ENCODE measurements at regions of chr18 and their contacts with region 1.

Region 1: DNA sequence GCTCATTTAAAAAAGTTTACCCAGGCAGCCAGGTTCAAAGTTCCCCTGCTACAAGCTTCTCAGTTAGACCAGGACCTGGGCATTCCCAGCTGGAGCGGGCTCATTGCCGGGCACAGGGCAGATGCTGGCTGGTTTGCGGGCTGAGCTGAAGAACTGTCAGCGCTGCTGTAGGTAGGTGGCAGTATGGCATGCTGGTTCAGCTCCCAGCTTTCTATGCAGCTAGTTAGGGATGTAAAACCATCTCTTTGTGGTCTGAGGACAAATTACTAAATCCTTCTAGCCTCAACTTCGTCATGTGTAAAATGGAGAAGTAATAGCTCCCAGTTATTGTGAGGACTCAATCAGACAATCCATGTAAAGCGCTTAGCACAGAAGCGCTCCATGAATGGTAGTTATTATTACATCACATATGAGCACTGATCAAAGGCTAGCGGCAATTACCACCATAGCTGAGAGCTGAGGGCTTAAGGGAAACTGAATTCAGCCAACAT is 2.4 kb upstream of the LDLRAD4 start:
- DNase-seq: peak; percentile 20 to 72 (median 62)
- ATAC-seq: peak; percentile 75
- H3K4me3 ChIP-seq: peak overlapping the region; percentile 48
- H3K4me3 Mint-ChIP-seq: peak overlapping the region; percentile 87 to 99 (median 94)
- H3K27ac ChIP-seq: peak overlapping the region; percentile 60
- H3K27ac Mint-ChIP-seq: peak overlapping the region in 8 of 9 donors; percentile 76 to 96 (median 88)
- H3K4me1 ChIP-seq: peaks cover 5 to 16% of the 10 kb centered on the region in 2 donors
- H3K4me1 Mint-ChIP-seq: peaks cover 14 to 38% (median 35%) of the 10 kb centered on the region in 7 donors
- H3K27me3 ChIP-seq: no peaks in the 10 kb centered on the region
- H3K27me3 Mint-ChIP-seq: peaks cover 0 to 50% (median 6%) of the 10 kb centered on the region in 5 donors

Region 2: DNA sequence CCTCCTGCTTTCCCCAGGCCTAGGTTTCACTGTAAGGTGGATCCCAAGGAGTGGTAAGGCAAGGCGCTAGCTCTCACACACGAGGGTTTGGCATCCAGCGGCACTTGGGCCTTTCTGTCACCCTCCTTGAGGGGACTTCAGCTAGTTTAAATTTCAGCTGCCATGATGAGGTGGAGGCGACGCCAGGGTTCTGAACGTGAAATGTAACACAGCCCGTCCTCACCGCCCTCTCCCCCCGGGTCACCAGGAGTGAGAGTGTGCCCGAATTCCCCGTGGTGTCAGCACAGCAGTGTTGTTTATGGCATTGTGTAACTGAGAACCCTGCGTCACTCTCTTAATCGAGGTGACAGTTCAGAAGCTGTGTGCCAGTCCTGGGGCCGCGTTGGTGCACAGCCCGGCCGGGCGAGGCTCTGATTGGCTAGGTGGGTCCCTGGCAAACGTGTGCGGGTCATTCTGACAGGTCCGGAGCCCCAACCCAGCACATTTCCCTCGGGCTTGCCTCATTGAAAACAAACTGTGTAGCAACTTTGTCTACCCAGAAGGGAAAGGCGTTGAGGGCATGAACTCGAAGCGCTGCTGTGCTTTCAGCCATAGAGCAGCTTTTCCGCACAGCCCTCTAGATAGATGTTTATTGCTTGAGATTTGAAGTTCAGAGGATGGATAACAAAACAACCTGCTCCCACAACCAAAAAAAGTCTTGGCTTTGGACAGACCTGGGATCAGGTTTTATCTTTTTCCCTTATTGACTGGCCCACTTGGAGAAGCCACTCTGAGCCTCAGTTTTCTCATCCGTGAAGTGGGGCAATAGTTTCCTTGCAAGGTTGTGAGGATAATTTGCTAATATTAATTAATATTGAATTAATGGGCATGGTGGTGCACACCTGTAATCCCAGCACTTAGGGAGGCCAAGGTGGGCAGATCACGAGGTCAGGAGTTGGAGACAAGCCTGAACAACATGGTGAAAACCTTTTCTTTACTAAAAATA is 957.1 kb before region 1 on chr18:
- CTCF ChIA-PET with region 1: no interaction called
- POLR2A ChIA-PET with region 1: no interaction called
- intact Hi-C with region 1: no loop called
- DNase-seq: no peak
- ATAC-seq: no peak
- H3K4me3 ChIP-seq: no peak overlapping the region
- H3K4me3 Mint-ChIP-seq: no peak overlapping the region
- H3K27ac ChIP-seq: no peak overlapping the region
- H3K27ac Mint-ChIP-seq: no peak overlapping the region
- H3K4me1 ChIP-seq: no peaks in the 10 kb centered on the region
- H3K4me1 Mint-ChIP-seq: peaks cover 0 to 3% (median 0%) of the 10 kb centered on the region in 7 donors
- H3K27me3 ChIP-seq: no peaks in the 10 kb centered on the region
- H3K27me3 Mint-ChIP-seq: peaks cover 26 to 38% (median 30%) of the 10 kb centered on the region in 5 donors

Region 3: GRCh38 chr18:13279181-13280069 is 63.3 kb after region 1 on chr18:
- CTCF ChIA-PET with region 1: interaction called, 8 read pairs
- POLR2A ChIA-PET with region 1: interaction called, 6 read pairs
- intact Hi-C with region 1: loop called in 1 of 2 experiments (anchors 2 kb)
- DNase-seq: peak in 8 of 9 donors; percentile 26 to 52 (median 40)
- ATAC-seq: peak; percentile 61
- H3K4me3 ChIP-seq: peak overlapping the region; percentile 27
- H3K4me3 Mint-ChIP-seq: peak overlapping the region; percentile 72 to 91 (median 85)
- H3K27ac ChIP-seq: peak overlapping the region; percentile 66
- H3K27ac Mint-ChIP-seq: peak overlapping the region; percentile 63 to 94 (median 89)
- H3K4me1 ChIP-seq: peaks cover 2 to 19% of the 10 kb centered on the region in 2 donors
- H3K4me1 Mint-ChIP-seq: peaks cover 9 to 84% (median 71%) of the 10 kb centered on the region in 7 donors
- H3K27me3 ChIP-seq: no peaks in the 10 kb centered on the region
- H3K27me3 Mint-ChIP-seq: no peaks in the 10 kb centered on the region

Region 4: DNA sequence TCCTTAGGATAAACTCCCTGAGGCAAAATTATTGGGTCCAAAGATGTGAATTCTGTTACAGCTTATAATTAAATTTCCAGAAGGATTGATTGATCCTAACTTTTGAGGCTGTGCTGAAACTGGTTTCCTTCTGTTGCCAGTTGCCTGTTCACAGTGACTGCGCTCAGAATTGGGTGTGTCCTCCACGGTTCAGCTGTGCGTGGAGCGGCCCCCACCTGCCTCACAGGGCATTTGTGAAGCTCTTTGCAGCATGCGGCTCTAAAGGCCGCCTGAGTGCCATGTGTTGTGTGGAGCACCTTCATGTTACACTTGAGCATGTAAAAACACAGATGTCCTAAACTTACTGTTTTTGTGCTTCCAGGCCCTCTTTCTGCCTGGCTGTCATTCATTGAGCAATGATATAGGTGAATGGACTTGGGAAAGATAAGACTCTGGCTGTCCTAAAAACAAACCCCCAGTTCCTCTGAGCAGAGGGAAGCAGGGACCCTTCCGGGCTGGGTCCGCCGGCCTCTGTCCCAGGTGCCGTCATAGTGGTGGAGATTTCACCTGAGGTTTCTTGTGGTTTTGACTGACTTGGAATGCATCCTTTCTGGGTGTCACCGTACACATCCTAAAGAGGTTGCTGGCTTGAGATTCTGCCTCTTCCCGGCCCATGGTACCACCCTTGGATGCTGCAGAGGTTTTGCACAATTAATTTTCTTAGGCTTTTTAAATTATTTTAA is 176.1 kb after region 1 on chr18:
- CTCF ChIA-PET with region 1: no interaction called
- POLR2A ChIA-PET with region 1: no interaction called
- intact Hi-C with region 1: loop called in 1 of 2 experiments (anchors 1 kb)
- DNase-seq: peak in 3 of 9 donors; percentile 30 to 35 (median 31)
- ATAC-seq: peak; percentile 50
- H3K4me3 ChIP-seq: no peak overlapping the region
- H3K4me3 Mint-ChIP-seq: no peak overlapping the region
- H3K27ac ChIP-seq: no peak overlapping the region
- H3K27ac Mint-ChIP-seq: peak overlapping the region in 3 of 9 donors; percentile 20 to 50 (median 33)
- H3K4me1 ChIP-seq: peaks cover 0 to 5% of the 10 kb centered on the region in 2 donors
- H3K4me1 Mint-ChIP-seq: peaks cover 7 to 61% (median 29%) of the 10 kb centered on the region in 7 donors
- H3K27me3 ChIP-seq: no peaks in the 10 kb centered on the region
- H3K27me3 Mint-ChIP-seq: no peaks in the 10 kb centered on the region

Region 5: GRCh38 chr18:13525381-13526029 is 309.4 kb after region 1 on chr18:
- CTCF ChIA-PET with region 1: interaction called, 18 read pairs
- POLR2A ChIA-PET with region 1: interaction called, 4 read pairs
- intact Hi-C with region 1: loop called in 1 of 2 experiments (anchors 1 kb)
- DNase-seq: no peak
- ATAC-seq: no peak
- H3K4me3 ChIP-seq: no peak overlapping the region
- H3K4me3 Mint-ChIP-seq: no peak overlapping the region
- H3K27ac ChIP-seq: no peak overlapping the region
- H3K27ac Mint-ChIP-seq: peak overlapping the region in 2 of 9 donors; percentile 5 to 19
- H3K4me1 ChIP-seq: no peaks in the 10 kb centered on the region
- H3K4me1 Mint-ChIP-seq: peaks cover 6 to 56% (median 28%) of the 10 kb centered on the region in 7 donors
- H3K27me3 ChIP-seq: no peaks in the 10 kb centered on the region
- H3K27me3 Mint-ChIP-seq: no peaks in the 10 kb centered on the region

Region 6: DNA sequence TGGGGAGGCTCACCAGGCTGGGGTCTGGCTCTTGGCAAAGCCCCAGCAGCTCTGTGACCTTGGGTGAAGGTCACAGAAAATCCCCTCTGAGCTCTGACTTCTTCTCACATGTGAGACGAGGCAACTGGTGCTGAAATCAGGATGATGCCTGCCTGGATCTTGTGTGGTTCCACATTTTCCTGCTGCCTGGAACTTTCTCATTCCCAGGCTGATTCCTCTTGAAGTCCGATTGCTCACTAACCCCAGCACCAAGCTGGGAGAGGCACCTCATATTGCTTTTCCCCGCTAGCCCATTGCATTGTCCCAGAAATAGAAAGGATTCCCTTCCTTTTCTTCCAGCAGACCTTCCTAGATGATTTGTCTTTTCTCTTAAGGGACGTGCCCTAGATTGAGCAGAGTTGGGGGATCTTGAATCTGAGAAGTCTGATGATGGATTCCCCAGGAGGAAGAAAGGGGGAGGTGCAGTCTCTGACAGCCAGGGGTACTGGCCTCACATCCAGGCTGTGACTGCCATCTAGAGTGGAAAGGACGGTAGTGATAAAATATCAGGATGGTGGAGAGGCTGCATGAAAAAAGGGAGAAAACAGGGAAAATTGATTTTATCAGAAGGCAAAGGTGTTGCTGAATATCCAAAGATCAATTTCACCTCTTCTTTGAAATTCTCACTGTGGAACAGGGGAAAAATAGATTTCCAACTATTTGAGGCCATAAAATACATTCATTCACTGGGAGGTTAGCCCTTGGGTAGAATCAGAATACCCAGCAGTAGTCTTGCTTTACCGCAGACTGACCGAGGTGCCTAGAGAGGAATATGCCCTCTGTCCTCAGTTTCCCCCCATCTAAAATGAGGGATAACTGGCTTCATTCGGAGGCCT is 413.9 kb after region 1 on chr18:
- CTCF ChIA-PET with region 1: interaction called, 14 read pairs
- POLR2A ChIA-PET with region 1: no interaction called
- intact Hi-C with region 1: loop called (anchors 1 kb)
- DNase-seq: peak in 8 of 9 donors; percentile 34 to 62 (median 56)
- ATAC-seq: peak; percentile 87
- H3K4me3 ChIP-seq: no peak overlapping the region
- H3K4me3 Mint-ChIP-seq: no peak overlapping the region
- H3K27ac ChIP-seq: no peak overlapping the region
- H3K27ac Mint-ChIP-seq: peak overlapping the region in 5 of 9 donors; percentile 1 to 58 (median 18)
- H3K4me1 ChIP-seq: no peaks in the 10 kb centered on the region
- H3K4me1 Mint-ChIP-seq: peaks cover 2 to 26% (median 14%) of the 10 kb centered on the region in 7 donors
- H3K27me3 ChIP-seq: no peaks in the 10 kb centered on the region
- H3K27me3 Mint-ChIP-seq: no peaks in the 10 kb centered on the region

Region 7: DNA sequence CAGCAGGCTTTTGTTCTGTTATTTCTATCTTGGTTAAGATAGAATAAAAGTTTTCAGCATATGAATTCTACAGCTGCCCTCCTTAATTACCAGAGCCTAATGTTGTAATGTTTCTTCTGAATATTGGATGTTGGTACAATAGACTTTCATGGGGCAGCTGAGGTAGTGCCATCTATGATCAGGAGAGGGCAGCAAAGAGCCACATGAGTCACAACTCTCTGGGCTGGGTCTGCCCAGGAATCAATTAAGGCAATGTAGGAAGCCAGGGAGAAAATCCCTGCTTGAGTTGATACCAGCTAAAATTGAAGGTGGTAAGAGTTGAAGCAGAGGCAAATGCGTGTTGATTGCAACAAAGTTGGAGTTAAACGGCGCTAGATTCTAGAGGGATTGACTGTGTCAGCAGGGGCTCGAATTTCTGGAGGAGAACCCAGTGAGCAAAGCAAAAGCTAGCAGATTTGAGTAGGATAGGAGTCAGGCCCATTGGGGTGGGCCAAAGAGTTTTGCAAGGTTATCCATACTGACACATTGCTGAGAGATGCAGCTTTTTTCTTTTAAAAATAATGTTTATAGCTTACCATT is 597.2 kb after region 1 on chr18:
- CTCF ChIA-PET with region 1: interaction called, 8 read pairs
- POLR2A ChIA-PET with region 1: no interaction called
- intact Hi-C with region 1: loop called in 1 of 2 experiments (anchors 1 kb)
- DNase-seq: peak in 8 of 9 donors; percentile 14 to 51 (median 30)
- ATAC-seq: peak; percentile 82
- H3K4me3 ChIP-seq: no peak overlapping the region
- H3K4me3 Mint-ChIP-seq: no peak overlapping the region
- H3K27ac ChIP-seq: no peak overlapping the region
- H3K27ac Mint-ChIP-seq: peak overlapping the region in 1 of 9 donors; percentile 80
- H3K4me1 ChIP-seq: no peaks in the 10 kb centered on the region
- H3K4me1 Mint-ChIP-seq: peaks cover 0 to 4% (median 0%) of the 10 kb centered on the region in 7 donors
- H3K27me3 ChIP-seq: no peaks in the 10 kb centered on the region
- H3K27me3 Mint-ChIP-seq: peaks cover 0 to 13% (median 4%) of the 10 kb centered on the region in 5 donors

Measured in naive thymus-derived CD4-positive, alpha-beta T cell (primary cell).